Naive thymus-derived CD4-positive, alpha-beta T cell (primary cell): ENCODE measurements at regions of chr10 and their contacts with region 1.

Region 1: DNA sequence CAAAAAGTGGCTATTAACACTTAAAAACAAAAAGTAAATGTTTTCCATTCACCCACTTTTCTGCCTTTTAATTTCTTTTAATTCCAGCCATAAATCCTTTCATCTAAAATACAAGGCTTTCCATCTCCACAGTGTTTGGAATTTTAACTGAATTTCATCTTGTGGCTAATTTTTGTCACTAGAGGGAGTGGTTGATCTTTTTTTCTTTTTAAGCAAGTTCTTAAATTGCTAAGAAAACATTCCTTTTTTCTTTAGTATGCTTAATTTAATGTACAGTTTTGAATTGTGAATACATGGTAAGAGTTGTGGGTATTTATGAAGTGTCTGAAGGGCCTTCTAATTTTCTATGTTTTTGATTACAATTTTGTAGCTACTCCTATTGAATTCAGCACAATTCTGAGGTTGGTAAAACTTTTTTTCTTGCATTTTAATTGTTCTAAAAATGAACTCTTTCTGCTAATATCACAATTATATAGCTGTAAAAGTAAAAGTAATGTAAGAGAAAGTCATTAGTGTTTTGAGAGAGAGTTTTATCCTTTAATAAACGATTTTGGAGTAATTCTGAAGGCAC is 54.9 kb upstream of the ANK3 start:
- DNase-seq: no peak
- ATAC-seq: no peak
- H3K4me3 ChIP-seq: no peak overlapping the region
- H3K4me3 Mint-ChIP-seq: no peak overlapping the region
- H3K27ac ChIP-seq: no peak overlapping the region
- H3K27ac Mint-ChIP-seq: no peak overlapping the region
- H3K4me1 ChIP-seq: peaks cover 0 to 11% of the 10 kb centered on the region in 2 donors
- H3K4me1 Mint-ChIP-seq: peaks cover 12 to 34% (median 20%) of the 10 kb centered on the region in 7 donors
- H3K27me3 ChIP-seq: no peaks in the 10 kb centered on the region
- H3K27me3 Mint-ChIP-seq: no peaks in the 10 kb centered on the region

Region 2: GRCh38 chr10:59865101-59865500 is 579.5 kb before region 1 on chr10:
- CTCF ChIA-PET with region 1: no interaction called
- POLR2A ChIA-PET with region 1: no interaction called
- intact Hi-C with region 1: loop called in 1 of 2 experiments (anchors 5 kb)
- DNase-seq: peak in 5 of 9 donors; percentile 9 to 27 (median 16)
- ATAC-seq: peak; percentile 59
- H3K4me3 ChIP-seq: no peak overlapping the region
- H3K4me3 Mint-ChIP-seq: peak overlapping the region in 9 of 10 donors; percentile 1 to 60 (median 41)
- H3K27ac ChIP-seq: no peak overlapping the region
- H3K27ac Mint-ChIP-seq: peak overlapping the region in 8 of 9 donors; percentile 0 to 77 (median 58)
- H3K4me1 ChIP-seq: peaks cover 4 to 14% of the 10 kb centered on the region in 2 donors
- H3K4me1 Mint-ChIP-seq: peaks cover 41 to 80% (median 64%) of the 10 kb centered on the region in 7 donors
- H3K27me3 ChIP-seq: no peaks in the 10 kb centered on the region
- H3K27me3 Mint-ChIP-seq: no peaks in the 10 kb centered on the region